CD14-positive monocyte (primary cell): ENCODE measurements at regions of chr17 and their contacts with region 1.

Region 1: DNA sequence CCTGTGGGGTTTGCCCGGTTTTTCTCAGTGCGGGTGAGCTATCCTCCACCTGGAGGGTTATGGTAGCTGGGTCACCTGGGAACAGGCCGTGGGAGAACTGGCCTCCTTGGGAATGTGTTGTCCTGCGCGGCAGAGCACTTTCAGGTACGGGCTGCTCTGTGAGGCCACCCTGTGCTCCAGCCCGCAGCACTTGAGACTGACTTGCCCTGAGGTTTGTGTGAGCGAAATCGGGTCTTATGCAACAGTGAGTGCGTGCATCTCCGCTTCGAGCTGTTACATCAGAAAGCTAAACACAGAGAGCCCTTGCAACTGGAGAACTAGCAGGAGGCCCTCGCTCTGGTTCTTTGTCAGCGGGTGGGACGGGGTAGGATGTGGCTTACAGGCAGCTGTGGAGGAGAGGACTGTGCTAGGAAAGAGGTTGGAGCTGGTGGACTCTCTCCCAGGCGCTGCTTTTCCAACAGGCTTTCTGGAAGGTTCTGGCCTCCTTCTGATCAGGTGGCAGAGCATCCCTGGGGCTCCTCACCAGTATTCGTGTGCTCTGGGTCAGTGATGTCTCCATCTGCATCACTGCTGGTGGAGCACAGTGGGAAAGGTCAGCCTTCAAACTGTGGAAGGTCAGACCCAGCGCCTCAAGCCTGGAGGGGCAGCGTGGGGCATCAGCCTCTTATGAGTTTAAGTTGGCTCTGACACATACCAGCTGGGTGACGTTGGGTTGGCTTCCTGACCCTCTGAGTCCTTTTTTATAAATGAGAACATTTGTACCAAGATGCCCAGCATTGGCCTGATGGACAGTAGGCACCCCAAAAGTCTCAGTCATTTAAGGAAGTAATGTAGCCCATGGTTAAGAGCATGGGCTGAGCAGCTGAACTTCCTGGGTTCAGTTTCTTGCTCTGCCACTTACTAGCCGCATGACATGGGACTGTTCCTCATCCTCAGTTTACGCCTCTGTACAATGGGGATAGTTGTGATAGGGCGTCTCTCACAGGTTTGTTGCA is 76.3 kb downstream of the KSR1 start:
- DNase-seq: peak; percentile 93 to 97 (median 95)
- H3K4me3 ChIP-seq: peak overlapping the region in 1 of 3 experiments; percentile 61
- H3K4me3 Mint-ChIP-seq: peak overlapping the region; percentile 77 to 88
- H3K27ac ChIP-seq: peak overlapping the region; percentile 98 to 100
- H3K27ac Mint-ChIP-seq: peak overlapping the region; percentile 99 to 100 (median 99)
- H3K4me1 ChIP-seq: peaks cover 66 to 70% of the 10 kb centered on the region in 2 donors
- H3K4me1 Mint-ChIP-seq: peaks cover 83% of the 10 kb centered on the region
- H3K27me3 ChIP-seq: no peaks in the 10 kb centered on the region
- H3K27me3 Mint-ChIP-seq: peaks cover 0 to 2% (median 0%) of the 10 kb centered on the region in 3 donors
- CTCF ChIP-seq: no peak

Region 2: DNA sequence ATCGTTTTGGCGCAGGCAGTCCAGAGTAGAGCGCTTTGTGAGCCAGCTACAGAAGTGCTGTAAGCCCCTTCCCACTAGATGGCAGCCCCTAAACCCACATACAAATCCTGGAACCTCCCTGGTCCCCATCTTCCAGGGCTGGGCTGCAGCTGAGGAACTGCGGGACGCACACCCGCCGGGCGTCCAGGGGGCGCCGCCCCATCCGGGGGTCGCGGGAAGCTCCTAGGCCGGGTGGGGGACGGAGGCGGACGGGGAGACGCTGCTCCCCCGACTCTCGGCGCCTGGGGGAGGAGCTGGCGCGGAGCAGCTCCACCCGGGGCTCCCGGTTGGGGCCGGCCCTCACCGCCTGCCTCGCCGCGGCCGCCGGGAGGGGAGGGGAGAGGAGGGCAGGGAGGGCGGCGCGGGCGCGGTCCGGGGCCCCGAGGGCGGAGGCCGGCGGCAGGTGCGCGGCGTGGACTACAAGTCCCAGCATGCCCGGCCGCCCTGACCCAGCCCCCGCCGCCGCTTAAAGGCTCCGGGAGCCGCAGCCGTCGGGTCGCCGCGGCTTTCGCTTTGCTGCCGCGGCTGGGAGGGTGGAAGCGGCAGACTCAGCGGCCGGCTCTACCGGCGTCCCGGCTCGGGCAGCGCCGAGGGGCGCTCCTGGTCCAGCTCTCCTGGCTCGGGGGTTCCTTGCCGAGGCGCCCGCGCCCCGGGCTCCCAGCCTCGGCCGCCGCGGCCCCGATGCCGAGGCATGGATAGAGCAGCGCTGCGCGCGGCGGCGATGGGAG is 76.5 kb before region 1 on chr17 and contains the start of gene KSR1:
- intact Hi-C with region 1: loop called (anchors 2 to 5 kb)
- DNase-seq: peak; percentile 41 to 63 (median 62)
- H3K4me3 ChIP-seq: peak within 1 kb of the TSS; percentile 54 to 89 (median 83)
- H3K4me3 Mint-ChIP-seq: peak within 1 kb of the TSS; percentile 93 to 97
- H3K27ac ChIP-seq: peak within 1 kb of the TSS; percentile 38 to 81
- H3K27ac Mint-ChIP-seq: peak within 1 kb of the TSS; percentile 73 to 90 (median 86)
- H3K4me1 ChIP-seq: peaks cover 19 to 23% of the 10 kb centered on the region in 2 donors
- H3K4me1 Mint-ChIP-seq: peaks cover 38% of the 10 kb centered on the region
- H3K27me3 ChIP-seq: no peaks in the 10 kb centered on the region
- H3K27me3 Mint-ChIP-seq: peaks cover 2 to 8% (median 5%) of the 10 kb centered on the region in 3 donors
- CTCF ChIP-seq: no peak
- polyA plus RNA-seq, gene KSR1: 1.2 to 111 (median 4.2) TPM

Region 3: DNA sequence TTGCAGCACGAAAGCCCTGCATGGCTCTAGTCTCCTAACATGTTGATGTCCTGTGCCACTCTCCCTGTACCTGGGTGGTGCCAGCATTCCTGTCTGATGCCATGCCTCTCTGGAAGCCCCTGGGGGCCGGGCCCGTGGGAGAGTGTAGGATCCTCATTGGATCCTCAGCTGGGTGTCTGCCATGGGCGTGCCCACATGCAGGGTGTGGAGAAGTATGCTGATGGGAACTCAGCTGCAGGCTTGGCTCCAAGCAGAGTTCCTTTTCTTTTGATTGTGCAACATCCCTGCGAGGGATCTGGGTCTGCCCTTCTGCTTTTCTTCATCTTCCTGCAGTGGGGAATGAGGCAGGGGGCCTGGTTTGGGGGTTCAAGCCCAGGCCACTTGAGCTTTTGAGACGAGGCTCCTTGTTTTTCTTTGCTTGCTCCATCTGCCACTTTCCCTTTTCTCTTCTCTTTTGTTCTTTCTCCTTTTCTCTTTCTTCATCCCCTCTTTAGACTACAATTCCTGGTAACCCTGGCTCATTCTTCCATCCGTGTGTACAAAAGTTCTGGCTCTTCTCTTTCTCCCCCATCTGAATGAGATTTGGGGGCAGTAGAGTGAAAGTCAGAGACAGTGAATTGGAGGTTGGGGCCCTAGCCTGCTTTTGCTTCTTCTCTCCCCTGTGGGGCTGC is 43.4 kb before region 1 on chr17:
- intact Hi-C with region 1: loop called (anchors 5 kb)
- DNase-seq: peak; percentile 70 to 83 (median 82)
- H3K4me3 ChIP-seq: peak overlapping the region in 1 of 3 experiments; percentile 59
- H3K4me3 Mint-ChIP-seq: peak overlapping the region; percentile 55 to 81
- H3K27ac ChIP-seq: peak overlapping the region; percentile 85 to 88
- H3K27ac Mint-ChIP-seq: peak overlapping the region; percentile 91 to 97 (median 96)
- H3K4me1 ChIP-seq: peaks cover 84 to 94% of the 10 kb centered on the region in 2 donors
- H3K4me1 Mint-ChIP-seq: peaks cover 93% of the 10 kb centered on the region
- H3K27me3 ChIP-seq: no peaks in the 10 kb centered on the region
- H3K27me3 Mint-ChIP-seq: peaks cover 0 to 3% (median 0%) of the 10 kb centered on the region in 3 donors
- CTCF ChIP-seq: no peak

Region 4: GRCh38 chr17:27494192-27495091 is 38.1 kb before region 1 on chr17:
- intact Hi-C with region 1: loop called (anchors 5 kb)
- DNase-seq: peak; percentile 76 to 83 (median 78)
- H3K4me3 ChIP-seq: peak overlapping the region in 1 of 3 experiments; percentile 34
- H3K4me3 Mint-ChIP-seq: peak overlapping the region in 1 of 2 donors; percentile 75
- H3K27ac ChIP-seq: peak overlapping the region; percentile 77 to 81
- H3K27ac Mint-ChIP-seq: peak overlapping the region; percentile 91 to 96 (median 94)
- H3K4me1 ChIP-seq: peaks cover 49 to 62% of the 10 kb centered on the region in 2 donors
- H3K4me1 Mint-ChIP-seq: peaks cover 73% of the 10 kb centered on the region
- H3K27me3 ChIP-seq: no peaks in the 10 kb centered on the region
- H3K27me3 Mint-ChIP-seq: no peaks in the 10 kb centered on the region
- CTCF ChIP-seq: no peak

Region 5: GRCh38 chr17:27670791-27671590 is 138.4 kb after region 1 on chr17:
- intact Hi-C with region 1: no loop called
- DNase-seq: no peak
- H3K4me3 ChIP-seq: no peak overlapping the region
- H3K4me3 Mint-ChIP-seq: no peak overlapping the region
- H3K27ac ChIP-seq: no peak overlapping the region
- H3K27ac Mint-ChIP-seq: no peak overlapping the region
- H3K4me1 ChIP-seq: no peaks in the 10 kb centered on the region
- H3K4me1 Mint-ChIP-seq: no peaks in the 10 kb centered on the region
- H3K27me3 ChIP-seq: no peaks in the 10 kb centered on the region
- H3K27me3 Mint-ChIP-seq: peaks cover 0 to 2% (median 0%) of the 10 kb centered on the region in 3 donors
- CTCF ChIP-seq: no peak